ENCODE measurements at regions of chr6 and their contacts with region 1.

Region 1: DNA sequence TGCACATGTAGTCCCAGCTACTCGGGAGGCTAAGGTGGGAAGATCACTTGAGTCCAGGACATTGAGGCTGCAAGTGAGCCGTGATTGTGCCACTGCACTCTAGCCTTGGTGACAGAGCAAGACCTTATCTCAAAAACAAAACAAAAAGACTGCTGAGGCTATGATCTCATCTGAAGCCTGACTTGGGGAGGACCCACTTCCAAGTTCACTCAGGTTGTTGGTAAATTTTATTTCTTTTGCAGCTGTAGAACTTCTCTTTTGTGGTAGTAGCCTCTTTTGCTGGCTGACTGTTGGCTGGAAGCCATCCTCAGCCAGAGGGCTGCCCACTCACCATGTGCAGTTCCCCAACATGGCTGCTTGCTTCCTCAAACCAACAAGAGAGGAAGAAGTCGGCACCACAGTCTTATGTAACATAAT is 36.8 kb upstream of the ME1 start:
- H3K4me3 Mint-ChIP-seq: no peak overlapping the region
- H3K27ac Mint-ChIP-seq: peak overlapping the region; percentile 85
- H3K4me1 Mint-ChIP-seq: peaks cover 65% of the 10 kb centered on the region
- H3K27me3 Mint-ChIP-seq: peaks cover 2% of the 10 kb centered on the region

Region 2: GRCh38 chr6:83430611-83431563 is 36.7 kb before region 1 on chr6 and contains the start of gene ME1:
- intact Hi-C with region 1: loop called (anchors 2 kb)
- H3K4me3 Mint-ChIP-seq: peak within 1 kb of the TSS; percentile 84
- H3K27ac Mint-ChIP-seq: peak within 1 kb of the TSS; percentile 92
- H3K4me1 Mint-ChIP-seq: peaks cover 34% of the 10 kb centered on the region
- H3K27me3 Mint-ChIP-seq: peaks cover 8% of the 10 kb centered on the region

Region 3: DNA sequence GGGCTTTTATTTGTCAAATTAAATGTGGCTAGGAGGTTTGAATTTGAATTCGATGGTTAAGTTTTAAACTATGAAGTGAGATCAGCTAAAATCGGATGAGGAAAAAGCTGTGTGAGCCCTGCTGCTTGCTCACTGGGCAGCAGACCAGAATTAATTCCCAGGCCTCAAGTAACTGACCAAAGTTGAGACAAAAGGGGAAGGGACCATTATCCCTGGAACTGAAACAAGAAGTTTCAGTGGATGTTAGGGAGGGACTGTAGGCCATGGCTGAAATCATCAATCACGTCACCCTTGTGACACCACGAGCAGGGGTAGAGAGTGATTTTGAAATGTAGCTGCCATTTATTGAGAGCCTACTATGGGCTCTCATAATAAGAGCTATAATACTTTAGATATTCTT is 37.7 kb after region 1 on chr6:
- intact Hi-C with region 1: loop called (anchors 5 kb)
- H3K4me3 Mint-ChIP-seq: no peak overlapping the region
- H3K27ac Mint-ChIP-seq: no peak overlapping the region
- H3K4me1 Mint-ChIP-seq: peaks cover 5% of the 10 kb centered on the region
- H3K27me3 Mint-ChIP-seq: peaks cover 25% of the 10 kb centered on the region

Region 4: DNA sequence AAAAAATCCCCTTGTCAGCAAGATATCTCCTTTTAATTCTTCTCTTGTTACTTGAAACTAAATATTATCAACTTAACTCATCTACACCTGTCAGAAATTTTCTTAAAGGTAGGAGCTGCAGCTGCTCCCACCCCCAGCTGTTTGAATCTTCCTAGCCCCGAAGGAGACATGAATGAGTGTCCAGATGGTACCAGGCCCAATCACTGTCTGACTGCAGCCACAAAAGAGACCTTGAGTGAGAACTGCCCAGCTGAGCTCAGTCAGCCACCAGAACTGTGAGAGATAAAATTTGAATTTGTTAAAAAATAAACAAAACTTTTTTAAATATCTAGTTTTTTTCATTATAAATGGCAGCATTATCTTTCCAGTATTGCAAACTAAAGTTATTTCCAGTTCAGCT is 129.4 kb after region 1 on chr6:
- intact Hi-C with region 1: no loop called
- H3K4me3 Mint-ChIP-seq: no peak overlapping the region
- H3K27ac Mint-ChIP-seq: no peak overlapping the region
- H3K4me1 Mint-ChIP-seq: peaks cover 2% of the 10 kb centered on the region
- H3K27me3 Mint-ChIP-seq: no peaks in the 10 kb centered on the region